Activated CD4-positive, alpha-beta T cell treated with anti-CD3 and anti-CD28 coated beads for 36 hours (primary cell): ENCODE measurements at regions of chr17 and their contacts with region 1.

Region 1: GRCh38 chr17:43170766-43171585 is at the start of gene NBR1:
- DNase-seq: peak; percentile 97
- ATAC-seq: peak; percentile 86
- H3K4me3 Mint-ChIP-seq: no peak within 1 kb of the TSS
- H3K27ac Mint-ChIP-seq: no peak within 1 kb of the TSS
- H3K4me1 Mint-ChIP-seq: peaks cover 30% of the 10 kb centered on the region
- H3K27me3 Mint-ChIP-seq: no peaks in the 10 kb centered on the region
- total RNA-seq, gene NBR1: 52.8 to 55.6 TPM

Region 2: DNA sequence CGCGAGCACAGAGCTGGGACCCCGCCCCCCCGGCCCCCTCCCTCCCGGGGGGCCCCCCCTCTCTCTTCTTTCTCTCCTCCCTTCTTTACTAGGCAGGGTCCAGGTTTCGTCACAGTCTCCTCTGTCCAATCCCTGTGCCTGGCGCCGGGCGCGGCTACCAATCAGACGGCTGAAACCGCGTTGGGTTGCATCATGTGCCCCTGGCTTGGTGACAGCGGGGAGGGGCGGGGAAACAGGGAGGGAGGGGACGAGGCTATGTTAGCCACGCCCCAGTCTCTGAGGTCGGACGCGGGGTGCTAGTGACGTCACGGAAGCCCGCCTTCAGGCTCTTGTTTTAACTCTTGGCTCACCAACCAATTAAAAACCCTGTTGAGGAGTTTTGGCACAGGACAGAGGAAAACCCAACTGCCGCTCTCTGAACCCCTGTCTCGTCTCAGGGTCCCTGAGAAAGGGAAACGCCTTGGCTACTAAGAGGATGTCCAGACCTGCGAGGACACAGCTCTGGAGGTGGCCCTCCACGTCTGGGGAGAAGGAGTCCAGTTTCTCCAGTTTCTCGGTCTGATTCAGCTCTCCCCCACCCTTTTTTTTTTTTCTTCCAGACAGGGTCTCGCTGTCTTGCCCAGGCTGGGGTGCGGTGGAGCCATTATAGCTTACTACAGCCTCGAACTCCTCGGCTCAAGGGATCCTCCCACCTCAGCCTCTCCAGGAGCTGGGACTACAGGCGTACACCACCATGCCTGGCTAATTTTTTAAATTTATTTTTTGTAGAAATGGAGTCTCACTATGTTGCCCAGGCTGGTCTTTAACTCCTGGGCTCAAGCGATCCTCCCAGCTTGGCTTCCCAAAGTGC is 493.7 kb before region 1 on chr17:
- CTCF ChIA-PET with region 1: no interaction called
- POLR2A ChIA-PET with region 1: no interaction called
- intact Hi-C with region 1: loop called in 1 of 2 experiments (anchors 1 kb)
- DNase-seq: peak; percentile 100
- ATAC-seq: peak; percentile 84
- H3K4me3 Mint-ChIP-seq: peak overlapping the region; percentile 70
- H3K27ac Mint-ChIP-seq: peak overlapping the region; percentile 69
- H3K4me1 Mint-ChIP-seq: peaks cover 49% of the 10 kb centered on the region
- H3K27me3 Mint-ChIP-seq: peaks cover 29% of the 10 kb centered on the region

Region 3: DNA sequence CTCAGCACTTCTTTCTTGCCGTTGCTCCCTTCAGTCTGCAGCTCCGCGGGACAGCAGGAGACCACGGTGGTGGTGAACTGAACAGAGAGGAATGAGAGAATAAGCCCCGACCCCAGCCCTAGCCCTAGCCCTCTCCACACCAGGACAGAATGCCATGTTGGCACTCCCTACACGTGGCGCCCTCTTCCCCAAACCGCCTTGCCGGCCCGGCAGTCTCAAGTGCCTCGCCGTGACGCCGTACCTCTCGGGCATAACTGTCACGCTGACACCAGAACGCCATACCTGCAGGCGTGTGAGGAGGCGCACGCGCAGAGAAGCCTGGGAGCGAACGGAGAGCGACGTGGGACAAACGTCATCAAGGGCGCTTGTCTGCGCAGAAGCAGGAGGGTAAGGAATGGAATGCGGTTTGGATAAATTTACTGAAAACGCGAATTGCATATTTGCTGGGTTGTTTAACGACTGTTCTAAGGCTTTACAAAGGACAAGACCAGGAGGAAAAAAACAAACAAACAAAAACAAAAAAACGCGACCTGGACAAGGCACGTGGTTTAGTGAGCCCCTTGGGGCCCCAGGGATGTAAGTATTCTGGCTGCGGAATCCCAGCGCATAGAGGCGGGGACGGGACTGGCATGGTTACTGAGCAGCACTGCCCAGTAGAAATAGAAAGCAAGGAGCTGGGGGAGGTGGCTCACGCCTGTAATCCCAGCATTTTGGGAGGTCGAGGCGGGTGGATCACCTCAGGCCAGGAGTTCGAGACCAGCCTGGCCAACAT is 206.6 kb before region 1 on chr17 and contains the start of gene AARSD1:
- CTCF ChIA-PET with region 1: no interaction called
- POLR2A ChIA-PET with region 1: no interaction called
- intact Hi-C with region 1: loop called in 1 of 2 experiments (anchors 1 kb)
- DNase-seq: peak; percentile 95
- ATAC-seq: peak; percentile 95
- H3K4me3 Mint-ChIP-seq: peak within 1 kb of the TSS; percentile 93
- H3K27ac Mint-ChIP-seq: peak within 1 kb of the TSS; percentile 90
- H3K4me1 Mint-ChIP-seq: peaks cover 22% of the 10 kb centered on the region
- H3K27me3 Mint-ChIP-seq: no peaks in the 10 kb centered on the region
- total RNA-seq, gene AARSD1: 40.8 to 58.6 TPM

Region 4: GRCh38 chr17:43024407-43025289 is 146.3 kb before region 1 on chr17 and contains the start of gene RND2:
- CTCF ChIA-PET with region 1: interaction called, 3 read pairs
- POLR2A ChIA-PET with region 1: no interaction called
- intact Hi-C with region 1: loop called in 1 of 2 experiments (anchors 1 kb)
- DNase-seq: peak; percentile 89
- ATAC-seq: peak; percentile 68
- H3K4me3 Mint-ChIP-seq: peak within 1 kb of the TSS; percentile 78
- H3K27ac Mint-ChIP-seq: peak within 1 kb of the TSS; percentile 71
- H3K4me1 Mint-ChIP-seq: peaks cover 26% of the 10 kb centered on the region
- H3K27me3 Mint-ChIP-seq: no peaks in the 10 kb centered on the region
- total RNA-seq, gene RND2: 0.05 to 0.16 TPM

Region 5: GRCh38 chr17:43040655-43041054 is 130.3 kb before region 1 on chr17:
- CTCF ChIA-PET with region 1: no interaction called
- POLR2A ChIA-PET with region 1: no interaction called
- intact Hi-C with region 1: no loop called
- DNase-seq: no peak
- ATAC-seq: no peak
- H3K4me3 Mint-ChIP-seq: no peak overlapping the region
- H3K27ac Mint-ChIP-seq: no peak overlapping the region
- H3K4me1 Mint-ChIP-seq: no peaks in the 10 kb centered on the region
- H3K27me3 Mint-ChIP-seq: no peaks in the 10 kb centered on the region

Region 6: GRCh38 chr17:43211480-43212402 is 40.8 kb after region 1 on chr17 and contains the start of gene TMEM106A:
- CTCF ChIA-PET with region 1: interaction called, 5 read pairs
- POLR2A ChIA-PET with region 1: interaction called, 3 read pairs
- intact Hi-C with region 1: loop called (anchors 1 kb)
- DNase-seq: peak; percentile 88
- ATAC-seq: peak; percentile 92
- H3K4me3 Mint-ChIP-seq: peak within 1 kb of the TSS; percentile 83
- H3K27ac Mint-ChIP-seq: peak within 1 kb of the TSS; percentile 92
- H3K4me1 Mint-ChIP-seq: peaks cover 25% of the 10 kb centered on the region
- H3K27me3 Mint-ChIP-seq: no peaks in the 10 kb centered on the region
- total RNA-seq, gene TMEM106A: 10.7 to 10.8 TPM

Region 7: GRCh38 chr17:43388359-43389045 is 217.5 kb after region 1 on chr17:
- CTCF ChIA-PET with region 1: no interaction called
- POLR2A ChIA-PET with region 1: no interaction called
- intact Hi-C with region 1: loop called in 1 of 2 experiments (anchors 2 kb)
- DNase-seq: peak; percentile 95
- ATAC-seq: peak; percentile 82
- H3K4me3 Mint-ChIP-seq: peak overlapping the region; percentile 80
- H3K27ac Mint-ChIP-seq: peak overlapping the region; percentile 98
- H3K4me1 Mint-ChIP-seq: peaks cover 16% of the 10 kb centered on the region
- H3K27me3 Mint-ChIP-seq: no peaks in the 10 kb centered on the region